Heart right ventricle (tissue), 16 donors: ENCODE measurements at regions of chr3 and their contacts with region 1.

Region 1: DNA sequence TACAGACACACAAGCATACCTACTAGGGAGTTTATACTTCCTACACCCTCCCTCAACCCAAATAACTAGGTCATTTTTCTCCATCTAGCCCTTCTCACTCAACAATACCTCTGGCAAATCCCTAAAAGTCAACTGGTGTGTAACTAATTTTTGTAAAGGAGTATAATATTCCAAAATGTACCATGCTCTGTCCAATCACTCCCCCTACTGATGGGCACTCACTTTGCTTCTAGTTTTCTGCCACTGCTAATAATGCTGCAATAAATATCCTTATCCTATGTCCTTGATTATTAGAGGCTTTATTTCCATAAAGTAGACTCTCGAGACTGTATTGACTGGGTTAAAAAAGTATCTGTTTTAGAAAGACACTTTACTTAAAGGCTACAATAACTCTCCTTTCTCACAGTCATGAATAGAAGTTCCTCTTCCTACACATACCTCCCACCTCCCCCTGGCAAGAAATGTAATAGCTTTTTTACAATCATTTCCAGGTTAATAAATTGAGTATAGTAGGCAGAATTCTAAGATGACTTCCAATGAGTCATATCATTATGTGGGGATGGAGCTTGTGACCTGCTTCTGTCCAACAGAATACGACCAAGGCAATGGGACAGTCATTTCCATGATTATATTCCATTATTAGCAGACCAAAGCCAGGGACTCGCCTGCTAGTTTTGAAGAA is 30.0 kb downstream of the SHQ1 start:
- DNase-seq: no peak
- ATAC-seq: no peak
- H3K4me3 ChIP-seq: no peak overlapping the region
- H3K27ac ChIP-seq: no peak overlapping the region
- H3K4me1 ChIP-seq: peaks cover 5 to 43% (median 32%) of the 10 kb centered on the region in 9 donors
- H3K27me3 ChIP-seq: no peaks in the 10 kb centered on the region
- CTCF ChIP-seq: peak; percentile 14 to 72 (median 54)

Region 2: DNA sequence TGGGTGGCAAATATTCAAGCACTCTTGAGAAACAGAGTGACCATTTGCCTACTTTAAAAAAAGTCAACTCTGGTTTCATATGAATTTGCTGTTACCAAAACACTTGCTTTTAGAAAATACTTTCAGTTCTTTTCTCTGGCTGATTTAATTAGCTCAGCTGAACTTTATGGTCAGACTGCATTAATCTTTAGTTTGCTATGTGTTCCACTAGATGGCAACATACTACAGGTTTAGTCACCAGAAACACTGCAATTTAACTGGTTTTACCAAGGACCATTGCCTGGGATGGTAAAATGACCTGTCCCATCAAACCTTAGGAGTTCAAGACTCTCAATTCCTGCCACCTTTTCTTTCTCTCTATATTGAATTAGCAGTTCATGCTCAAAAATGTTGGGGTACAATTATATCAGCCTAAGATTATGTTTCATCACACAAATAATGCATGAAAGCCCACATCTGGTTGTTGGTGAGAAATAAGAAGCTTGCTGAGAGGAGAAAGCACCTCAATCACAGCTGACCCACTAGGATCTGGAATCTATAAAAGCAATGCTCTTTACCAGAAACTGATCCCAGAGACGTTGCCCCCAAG is 1107.2 kb before region 1 on chr3:
- intact Hi-C with region 1: loop called in 4 of 10 experiments (anchors 5 to 10 kb)
- DNase-seq: no peak
- ATAC-seq: peak in 6 of 8 donors; percentile 43 to 70 (median 60)
- H3K4me3 ChIP-seq: no peak overlapping the region
- H3K27ac ChIP-seq: no peak overlapping the region
- H3K4me1 ChIP-seq: peaks cover 0 to 42% (median 4%) of the 10 kb centered on the region in 9 donors
- H3K27me3 ChIP-seq: no peaks in the 10 kb centered on the region
- CTCF ChIP-seq: peak; percentile 30 to 74 (median 64)

Region 3: GRCh38 chr3:71734883-71735282 is 1083.3 kb before region 1 on chr3:
- intact Hi-C with region 1: loop called in 2 of 10 experiments (anchors 10 kb)
- DNase-seq: no peak
- ATAC-seq: no peak
- H3K4me3 ChIP-seq: no peak overlapping the region
- H3K27ac ChIP-seq: no peak overlapping the region
- H3K4me1 ChIP-seq: peaks cover 0 to 7% (median 0%) of the 10 kb centered on the region in 9 donors
- H3K27me3 ChIP-seq: peaks cover 0 to 4% (median 0%) of the 10 kb centered on the region in 7 donors
- CTCF ChIP-seq: no peak

Region 4: DNA sequence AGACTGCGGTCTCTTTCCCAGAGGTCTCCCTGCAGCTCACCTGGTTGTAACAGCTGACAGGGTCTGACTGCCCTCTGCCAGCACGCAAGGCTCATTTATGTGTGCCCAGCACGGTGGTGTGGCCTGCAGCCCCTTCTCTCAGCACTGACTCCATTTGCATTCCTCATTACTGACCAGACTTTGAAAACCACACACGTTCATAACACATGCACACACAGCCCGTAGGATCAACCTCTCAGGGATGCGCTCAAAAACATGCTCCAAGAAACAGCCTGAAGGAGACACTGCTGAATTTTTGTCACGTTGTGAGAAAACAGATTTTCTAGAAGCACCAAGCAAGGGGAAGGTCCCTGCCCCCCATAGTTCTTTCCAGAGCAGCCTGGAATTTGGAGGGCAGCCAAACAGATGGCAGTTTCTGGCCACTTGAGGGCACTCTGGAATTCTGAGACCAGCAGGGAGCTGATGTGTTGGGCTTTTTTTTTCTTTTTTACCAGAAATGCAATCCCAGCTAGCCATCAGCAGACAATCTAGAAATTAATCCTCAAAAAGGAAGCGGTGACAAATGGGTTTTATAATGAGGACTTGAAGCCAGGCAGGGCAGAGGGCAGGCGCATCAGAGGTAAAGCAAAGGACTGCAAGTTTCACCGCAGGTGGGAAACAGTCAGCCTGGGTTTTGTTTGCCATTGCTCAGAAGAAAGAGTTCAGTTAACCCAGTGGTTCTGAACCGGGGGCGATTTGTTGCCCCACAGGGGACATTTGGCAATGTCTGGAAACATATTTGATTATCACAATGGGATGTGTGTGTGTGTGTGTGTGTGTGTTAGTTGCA is 862.8 kb before region 1 on chr3:
- intact Hi-C with region 1: loop called in 9 of 10 experiments (anchors 2 to 10 kb)
- DNase-seq: peak; percentile 59 to 82
- ATAC-seq: peak; percentile 34 to 85 (median 75)
- H3K4me3 ChIP-seq: no peak overlapping the region
- H3K27ac ChIP-seq: no peak overlapping the region
- H3K4me1 ChIP-seq: peaks cover 0 to 13% (median 7%) of the 10 kb centered on the region in 9 donors
- H3K27me3 ChIP-seq: peaks cover 0 to 4% (median 0%) of the 10 kb centered on the region in 7 donors
- CTCF ChIP-seq: peak; percentile 42 to 84 (median 72)

Region 5: GRCh38 chr3:72255791-72256559 is 562.3 kb before region 1 on chr3:
- intact Hi-C with region 1: loop called in 1 of 10 experiments (anchors 5 kb)
- DNase-seq: peak in 1 of 2 donors; percentile 26
- ATAC-seq: peak; percentile 51 to 86 (median 76)
- H3K4me3 ChIP-seq: no peak overlapping the region
- H3K27ac ChIP-seq: peak overlapping the region in 2 of 10 donors; percentile 4 to 19
- H3K4me1 ChIP-seq: peaks cover 5 to 32% (median 27%) of the 10 kb centered on the region in 9 donors
- H3K27me3 ChIP-seq: peaks cover 0 to 4% (median 0%) of the 10 kb centered on the region in 7 donors
- CTCF ChIP-seq: peak in 1 of 9 donors; percentile 16

Region 6: DNA sequence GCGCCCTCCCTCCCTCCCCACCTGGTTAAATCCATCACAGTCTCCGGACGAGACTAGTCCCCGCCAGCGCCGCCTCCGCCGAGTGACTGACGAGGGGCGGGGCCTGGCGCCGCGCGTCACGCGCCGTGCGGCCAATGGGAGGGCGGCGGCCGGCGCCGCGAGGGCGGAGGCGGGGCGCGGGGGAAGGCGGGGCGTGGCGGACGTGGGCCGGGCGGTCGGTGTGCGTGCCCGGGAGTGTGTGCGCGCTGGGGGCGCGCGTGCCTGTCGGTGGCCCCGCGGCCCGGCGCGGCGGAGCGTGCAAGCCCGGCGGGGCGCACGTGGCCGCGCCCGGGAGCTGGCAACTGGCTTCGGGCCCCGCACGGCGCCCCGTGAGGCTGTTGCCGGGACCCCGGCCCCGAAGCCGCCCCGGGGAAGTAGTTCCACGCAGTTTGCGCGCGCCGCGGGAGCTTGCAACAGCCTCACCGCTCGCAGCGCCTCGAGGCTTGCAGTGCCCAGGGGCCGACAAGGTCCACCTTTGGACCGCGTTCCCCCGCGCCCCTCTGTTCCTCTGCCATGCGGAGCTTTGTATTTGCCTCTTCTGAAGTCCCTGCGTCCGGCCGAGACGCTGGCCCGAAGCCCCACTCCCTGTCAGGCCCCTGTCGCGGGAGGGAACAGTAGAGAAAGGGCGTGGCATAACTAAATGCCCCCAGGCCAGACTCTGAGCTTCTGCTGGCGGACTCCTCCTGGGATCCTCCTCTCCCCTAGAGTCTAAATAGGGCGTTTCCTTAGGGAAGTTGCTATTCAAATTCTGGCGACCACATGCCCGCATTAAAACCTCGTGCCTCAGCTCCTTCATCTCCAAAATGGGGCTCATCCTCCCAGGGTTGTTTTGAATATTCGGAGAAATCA is 370.9 kb before region 1 on chr3:
- intact Hi-C with region 1: loop called in 2 of 10 experiments (anchors 5 to 10 kb)
- DNase-seq: peak; percentile 92 to 96
- ATAC-seq: peak; percentile 95 to 100 (median 97)
- H3K4me3 ChIP-seq: peak overlapping the region; percentile 52 to 89 (median 78)
- H3K27ac ChIP-seq: peak overlapping the region; percentile 74 to 93 (median 88)
- H3K4me1 ChIP-seq: peaks cover 0 to 45% (median 34%) of the 10 kb centered on the region in 9 donors
- H3K27me3 ChIP-seq: peaks cover 0 to 9% (median 0%) of the 10 kb centered on the region in 7 donors
- CTCF ChIP-seq: no peak

Region 7: DNA sequence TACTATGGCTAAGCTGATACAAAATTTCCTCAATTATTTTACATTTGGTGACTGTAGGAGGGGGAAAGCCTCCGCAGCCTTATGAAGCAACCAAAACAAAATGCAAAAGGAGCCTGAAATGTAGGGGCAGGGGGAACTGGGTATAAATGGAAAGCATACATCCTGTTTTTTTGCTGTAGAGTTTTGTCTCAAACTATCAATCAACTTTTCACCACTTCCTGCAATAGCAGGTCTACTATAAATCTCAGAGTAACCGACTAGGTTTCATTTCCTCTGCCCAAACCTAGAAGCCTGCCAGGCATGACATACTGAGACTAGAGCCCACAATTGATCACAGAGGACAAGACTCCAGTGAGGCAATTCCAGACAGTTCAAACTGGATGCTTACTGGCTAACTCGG is 61.3 kb before region 1 on chr3:
- intact Hi-C with region 1: no loop called
- DNase-seq: no peak
- ATAC-seq: peak in 1 of 8 donors; percentile 43
- H3K4me3 ChIP-seq: no peak overlapping the region
- H3K27ac ChIP-seq: no peak overlapping the region
- H3K4me1 ChIP-seq: peaks cover 0 to 9% (median 0%) of the 10 kb centered on the region in 9 donors
- H3K27me3 ChIP-seq: no peaks in the 10 kb centered on the region
- CTCF ChIP-seq: no peak